Dorsolateral prefrontal cortex (tissue), 120 donors: ENCODE measurements at regions of chr17 and their contacts with region 1.

Region 1: DNA sequence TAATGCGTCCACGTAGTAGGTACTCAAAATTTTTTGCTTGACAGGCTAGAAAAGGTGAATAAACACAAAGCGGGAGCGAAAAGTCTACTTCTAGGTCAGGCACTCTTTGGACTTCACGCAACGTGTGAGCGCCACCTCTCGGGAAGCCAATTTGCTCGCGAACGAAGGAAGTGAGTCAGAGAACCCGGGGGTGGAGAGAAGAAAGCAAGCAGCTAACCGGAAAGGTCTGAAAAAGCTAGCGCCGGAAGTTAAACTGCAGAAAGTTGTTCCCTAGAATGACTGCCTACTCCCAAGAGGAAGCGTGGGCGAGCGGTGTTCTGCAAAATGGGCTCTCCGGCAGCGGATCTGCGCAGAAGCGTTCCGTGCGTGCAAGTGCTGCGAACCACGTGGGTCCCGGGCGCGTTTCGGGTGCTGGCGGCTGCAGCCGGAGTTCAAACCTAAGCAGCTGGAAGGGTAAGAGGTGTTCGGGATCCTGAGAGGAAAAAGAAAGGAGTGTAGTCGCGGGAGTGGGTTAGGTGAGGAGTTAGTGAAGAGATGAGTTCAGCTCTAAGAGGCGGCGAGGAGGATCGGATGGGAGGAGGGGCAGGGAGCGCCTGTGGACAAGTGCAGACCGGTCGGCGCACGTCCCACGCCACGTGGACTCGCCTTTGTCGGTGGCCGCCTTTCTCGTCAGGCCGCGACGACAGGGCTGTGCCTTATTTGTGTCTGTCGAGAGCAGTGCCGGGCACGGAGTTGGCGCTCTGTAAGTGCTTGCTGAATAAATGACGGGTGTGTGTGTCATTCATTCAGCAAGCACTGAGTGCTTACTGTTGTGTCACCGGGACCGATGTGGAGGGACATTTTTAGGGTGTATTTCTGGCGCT is at the start of gene NME1:
- DNase-seq: peak; percentile 94 to 99 (median 96)
- H3K4me3 ChIP-seq: peak within 1 kb of the TSS; percentile 54 to 96 (median 82)
- H3K27ac ChIP-seq: peak within 1 kb of the TSS; percentile 86 to 99 (median 95)
- H3K27me3 ChIP-seq: no peaks in the 10 kb centered on the region
- CTCF ChIP-seq: peak; percentile 61 to 97 (median 88)
- total RNA-seq, gene NME1: 27.3 to 129 (median 82.4) TPM

Region 2: DNA sequence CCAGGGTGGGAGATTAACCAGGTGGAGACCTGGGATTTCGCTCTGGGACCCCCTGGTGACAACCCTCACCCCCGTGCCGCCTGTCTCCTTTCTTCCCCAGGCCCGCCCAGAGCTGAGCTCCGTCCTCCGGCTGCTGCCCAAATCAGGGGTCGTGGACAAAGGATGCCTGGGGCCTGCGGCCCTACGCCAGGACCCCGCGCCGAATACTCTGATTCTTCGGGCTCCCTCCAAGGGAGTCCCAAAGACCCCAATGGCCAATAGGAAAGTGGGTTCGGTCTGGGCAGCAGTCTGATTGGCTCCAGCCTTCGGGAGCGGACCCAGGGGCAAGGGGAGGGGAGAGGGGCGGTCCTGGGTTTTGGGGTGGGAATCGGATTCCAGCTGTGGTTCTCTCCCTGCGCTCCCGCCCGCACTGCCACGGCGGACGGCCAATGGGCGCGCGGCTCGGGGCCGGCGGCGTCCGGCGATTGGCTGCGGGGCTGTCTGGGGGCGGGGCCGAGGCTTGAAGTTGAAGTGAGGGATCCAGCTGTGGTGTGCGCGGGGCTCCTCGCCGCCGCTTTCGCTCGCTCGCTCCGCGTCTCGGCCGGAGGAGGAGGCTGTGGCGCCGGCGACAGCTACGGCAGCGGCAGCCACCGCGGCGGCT is 593.1 kb before region 1 on chr17 and contains the start of gene CACNA1G:
- intact Hi-C with region 1: no loop called
- DNase-seq: peak; percentile 73 to 96 (median 84)
- H3K4me3 ChIP-seq: peak within 1 kb of the TSS; percentile 43 to 73 (median 61)
- H3K27ac ChIP-seq: peak within 1 kb of the TSS in 16 of 59 donors; percentile 1 to 74 (median 33)
- H3K27me3 ChIP-seq: peaks cover 0 to 41% (median 6%) of the 10 kb centered on the region in 45 donors
- CTCF ChIP-seq: peak in 3 of 56 donors; percentile 9 to 17 (median 11)
- total RNA-seq, gene CACNA1G: 6.8 to 38.4 (median 21.8) TPM

Region 3: GRCh38 chr17:50853015-50853615 is 300.3 kb before region 1 on chr17:
- intact Hi-C with region 1: loop called in 1 of 2 experiments (anchors 5 kb)
- DNase-seq: no peak
- H3K4me3 ChIP-seq: no peak overlapping the region
- H3K27ac ChIP-seq: peak overlapping the region in 23 of 59 donors; percentile 7 to 94 (median 63)
- H3K27me3 ChIP-seq: no peaks in the 10 kb centered on the region
- CTCF ChIP-seq: no peak

Region 4: GRCh38 chr17:50865984-50866774 is 287.3 kb before region 1 on chr17 and contains the start of gene TOB1:
- intact Hi-C with region 1: loop called in 1 of 2 experiments (anchors 10 kb)
- DNase-seq: peak; percentile 93 to 99 (median 98)
- H3K4me3 ChIP-seq: peak within 1 kb of the TSS; percentile 63 to 98 (median 92)
- H3K27ac ChIP-seq: peak within 1 kb of the TSS; percentile 98 to 100 (median 100)
- H3K27me3 ChIP-seq: no peaks in the 10 kb centered on the region
- CTCF ChIP-seq: peak in 9 of 56 donors; percentile 6 to 33 (median 16)
- total RNA-seq, gene TOB1: 41.0 to 97.0 (median 58.6) TPM

Region 5: GRCh38 chr17:51000835-51001638 is 152.4 kb before region 1 on chr17:
- intact Hi-C with region 1: loop called (anchors 2 to 5 kb)
- DNase-seq: peak in 1 of 10 donors; percentile 28
- H3K4me3 ChIP-seq: no peak overlapping the region
- H3K27ac ChIP-seq: peak overlapping the region in 53 of 59 donors; percentile 2 to 87 (median 62)
- H3K27me3 ChIP-seq: no peaks in the 10 kb centered on the region
- CTCF ChIP-seq: peak; percentile 40 to 92 (median 73)

Region 6: GRCh38 chr17:51056813-51057510 is 96.5 kb before region 1 on chr17:
- intact Hi-C with region 1: loop called (anchors 2 to 10 kb)
- DNase-seq: peak in 2 of 10 donors; percentile 14 to 57
- H3K4me3 ChIP-seq: peak overlapping the region in 13 of 59 donors; percentile 1 to 40 (median 15)
- H3K27ac ChIP-seq: peak overlapping the region in 58 of 59 donors; percentile 4 to 91 (median 73)
- H3K27me3 ChIP-seq: no peaks in the 10 kb centered on the region
- CTCF ChIP-seq: peak; percentile 51 to 88 (median 76)

Region 7: DNA sequence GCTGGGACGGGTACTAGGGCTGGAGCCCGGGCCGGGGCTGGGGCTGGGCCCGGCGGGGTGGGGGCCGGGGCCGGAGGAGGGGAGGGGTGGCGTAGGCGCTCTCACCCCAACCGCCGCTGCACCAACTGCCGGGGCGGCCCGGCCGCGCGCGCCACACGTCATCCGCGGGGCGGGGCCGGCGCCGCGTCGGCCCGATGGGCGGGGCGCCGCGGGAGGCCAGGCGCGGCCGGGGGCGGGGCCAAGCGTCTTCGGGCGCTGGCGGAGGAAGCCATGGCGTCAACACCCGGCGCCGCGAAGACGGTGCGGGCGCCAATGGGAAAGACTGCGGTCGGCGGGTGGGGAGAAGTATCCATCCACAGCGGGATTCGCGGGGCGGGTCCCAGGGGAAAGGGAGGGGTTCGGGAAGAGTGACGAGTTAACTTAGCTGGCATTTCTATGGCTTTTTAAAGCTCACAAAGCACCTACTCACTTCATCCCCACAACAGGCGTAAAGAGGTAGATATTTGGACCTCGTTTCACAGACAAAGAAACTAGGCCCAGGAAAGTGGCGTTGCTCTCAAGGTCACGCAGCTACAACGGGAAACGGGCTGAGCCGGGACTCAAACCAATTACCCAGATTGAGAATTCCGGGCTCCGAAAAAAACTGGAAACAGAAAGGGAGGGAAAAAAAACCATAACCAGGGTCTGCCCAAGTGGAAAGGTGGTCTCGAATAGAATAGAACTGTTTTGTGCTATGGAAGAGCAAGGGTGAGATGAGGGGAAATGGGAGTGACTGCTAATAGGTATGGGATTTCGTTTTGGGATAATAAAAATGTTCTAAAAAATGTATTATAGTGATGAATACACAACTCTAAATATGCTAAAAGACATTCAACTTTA is 32.5 kb before region 1 on chr17 and contains the start of gene SPAG9:
- intact Hi-C with region 1: loop called (anchors 1 kb)
- DNase-seq: peak; percentile 80 to 97 (median 91)
- H3K4me3 ChIP-seq: peak within 1 kb of the TSS; percentile 69 to 100 (median 96)
- H3K27ac ChIP-seq: peak within 1 kb of the TSS; percentile 84 to 99 (median 96)
- H3K27me3 ChIP-seq: no peaks in the 10 kb centered on the region
- CTCF ChIP-seq: peak in 6 of 56 donors; percentile 12 to 29 (median 18)
- total RNA-seq, gene SPAG9: 177 to 522 (median 260) TPM

Region 8: GRCh38 chr17:51166197-51166986 is 13.0 kb after region 1 on chr17 and contains the start of gene NME2:
- intact Hi-C with region 1: loop called (anchors 1 to 2 kb)
- DNase-seq: peak; percentile 57 to 85 (median 74)
- H3K4me3 ChIP-seq: peak within 1 kb of the TSS; percentile 75 to 97 (median 88)
- H3K27ac ChIP-seq: peak within 1 kb of the TSS; percentile 23 to 94 (median 88)
- H3K27me3 ChIP-seq: no peaks in the 10 kb centered on the region
- CTCF ChIP-seq: peak in 8 of 56 donors; percentile 9 to 23 (median 14)
- total RNA-seq, gene NME2: 99.4 to 250 (median 169) TPM